ENCODE measurements at regions of chr5 and their contacts with region 1.

Region 1: DNA sequence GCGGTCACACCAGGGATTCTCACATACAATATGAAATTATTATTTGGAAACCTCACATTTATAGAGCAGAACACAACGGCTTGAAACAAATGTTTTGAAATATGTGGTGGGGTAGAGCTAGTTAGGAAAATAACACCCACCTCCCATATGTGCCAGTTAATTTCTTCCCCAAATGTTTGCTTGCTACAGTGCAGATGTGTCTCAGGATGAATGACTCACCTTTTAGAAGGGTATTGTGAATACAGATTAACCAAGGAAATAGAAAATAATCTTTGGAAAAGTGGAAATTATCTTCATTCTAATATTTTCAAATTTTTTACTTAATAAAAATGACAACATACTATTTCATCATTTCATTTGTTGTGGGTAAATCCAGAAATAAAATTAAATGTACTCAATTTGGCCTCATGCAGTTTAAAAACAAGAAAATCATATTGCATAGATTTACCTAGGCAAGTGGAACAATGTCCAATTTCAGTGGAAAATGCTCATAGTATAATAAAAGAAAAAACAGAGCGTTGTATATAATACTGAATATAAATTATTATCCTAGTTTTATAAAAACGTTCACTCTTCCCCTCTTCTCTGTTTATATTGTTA is 39.3 kb upstream of the RICTOR start:
- DNase-seq: no peak
- H3K4me3 Mint-ChIP-seq: no peak overlapping the region
- H3K27ac Mint-ChIP-seq: no peak overlapping the region
- H3K4me1 Mint-ChIP-seq: peaks cover 13% of the 10 kb centered on the region
- H3K27me3 Mint-ChIP-seq: no peaks in the 10 kb centered on the region
- CTCF ChIP-seq: no peak

Region 2: DNA sequence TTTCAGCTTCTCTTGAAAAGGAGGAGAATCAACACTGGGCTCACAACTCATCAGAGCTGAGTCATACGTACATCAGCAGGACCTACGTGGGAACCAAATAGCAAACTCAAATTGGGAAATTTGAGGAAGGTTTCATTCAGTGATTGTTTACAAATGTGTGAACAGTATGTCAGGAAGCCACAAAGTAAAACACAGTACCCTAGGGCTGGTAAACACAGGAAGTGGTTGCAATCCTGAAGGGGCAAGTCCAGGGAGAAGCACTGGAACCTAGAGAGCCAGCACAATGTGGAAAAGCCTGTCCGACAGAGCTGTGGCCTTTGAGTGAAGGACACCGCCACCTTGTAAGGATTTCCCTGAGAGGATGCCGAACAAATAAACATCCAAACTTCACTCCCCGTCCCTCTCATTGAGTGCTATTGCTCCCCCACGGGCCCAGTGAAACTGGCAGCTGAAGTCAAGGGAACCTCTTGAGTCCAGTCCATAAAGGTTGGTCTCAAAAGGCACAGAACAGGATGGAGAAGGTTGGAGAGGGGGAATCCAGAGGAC is 12.5 kb before region 1 on chr5:
- CTCF ChIA-PET with region 1: interaction called, 6 read pairs
- POLR2A ChIA-PET with region 1: interaction called, 18 read pairs
- intact Hi-C with region 1: no loop called
- DNase-seq: peak; percentile 98
- H3K4me3 Mint-ChIP-seq: peak overlapping the region; percentile 39
- H3K27ac Mint-ChIP-seq: peak overlapping the region; percentile 97
- H3K4me1 Mint-ChIP-seq: peaks cover 51% of the 10 kb centered on the region
- H3K27me3 Mint-ChIP-seq: no peaks in the 10 kb centered on the region
- CTCF ChIP-seq: no peak

Region 3: GRCh38 chr5:39159811-39160490 is 46.5 kb after region 1 on chr5:
- CTCF ChIA-PET with region 1: no interaction called
- POLR2A ChIA-PET with region 1: no interaction called
- intact Hi-C with region 1: no loop called
- DNase-seq: no peak
- H3K4me3 Mint-ChIP-seq: no peak overlapping the region
- H3K27ac Mint-ChIP-seq: no peak overlapping the region
- H3K4me1 Mint-ChIP-seq: peaks cover 11% of the 10 kb centered on the region
- H3K27me3 Mint-ChIP-seq: no peaks in the 10 kb centered on the region
- CTCF ChIP-seq: no peak

Region 4: DNA sequence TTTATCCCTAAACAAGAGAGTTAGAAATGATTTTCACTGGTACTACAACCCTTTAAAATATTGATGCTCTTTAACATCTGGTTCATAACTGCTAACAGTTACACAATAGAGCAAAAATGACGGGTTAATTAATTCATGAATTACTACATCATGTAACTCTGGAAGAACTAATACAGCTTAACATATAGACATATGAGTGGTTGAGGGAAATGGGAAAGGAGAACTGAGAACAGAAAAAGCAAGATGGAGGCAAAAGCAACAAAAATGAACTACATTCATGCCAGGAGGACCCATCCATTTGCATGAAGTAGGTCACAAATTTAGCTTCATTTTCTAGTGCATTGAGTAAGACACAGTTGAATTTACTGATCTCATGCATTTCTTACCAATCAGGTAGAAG is 189.0 kb after region 1 on chr5:
- CTCF ChIA-PET with region 1: no interaction called
- POLR2A ChIA-PET with region 1: no interaction called
- intact Hi-C with region 1: no loop called
- DNase-seq: no peak
- H3K4me3 Mint-ChIP-seq: no peak overlapping the region
- H3K27ac Mint-ChIP-seq: no peak overlapping the region
- H3K4me1 Mint-ChIP-seq: no peaks in the 10 kb centered on the region
- H3K27me3 Mint-ChIP-seq: no peaks in the 10 kb centered on the region
- CTCF ChIP-seq: no peak